Activated naive CD4-positive, alpha-beta T cell treated with anti-CD3 and anti-CD28 coated beads for 36 hours (primary cell): ENCODE measurements at regions of chr5 and their contacts with region 1.

Region 1: DNA sequence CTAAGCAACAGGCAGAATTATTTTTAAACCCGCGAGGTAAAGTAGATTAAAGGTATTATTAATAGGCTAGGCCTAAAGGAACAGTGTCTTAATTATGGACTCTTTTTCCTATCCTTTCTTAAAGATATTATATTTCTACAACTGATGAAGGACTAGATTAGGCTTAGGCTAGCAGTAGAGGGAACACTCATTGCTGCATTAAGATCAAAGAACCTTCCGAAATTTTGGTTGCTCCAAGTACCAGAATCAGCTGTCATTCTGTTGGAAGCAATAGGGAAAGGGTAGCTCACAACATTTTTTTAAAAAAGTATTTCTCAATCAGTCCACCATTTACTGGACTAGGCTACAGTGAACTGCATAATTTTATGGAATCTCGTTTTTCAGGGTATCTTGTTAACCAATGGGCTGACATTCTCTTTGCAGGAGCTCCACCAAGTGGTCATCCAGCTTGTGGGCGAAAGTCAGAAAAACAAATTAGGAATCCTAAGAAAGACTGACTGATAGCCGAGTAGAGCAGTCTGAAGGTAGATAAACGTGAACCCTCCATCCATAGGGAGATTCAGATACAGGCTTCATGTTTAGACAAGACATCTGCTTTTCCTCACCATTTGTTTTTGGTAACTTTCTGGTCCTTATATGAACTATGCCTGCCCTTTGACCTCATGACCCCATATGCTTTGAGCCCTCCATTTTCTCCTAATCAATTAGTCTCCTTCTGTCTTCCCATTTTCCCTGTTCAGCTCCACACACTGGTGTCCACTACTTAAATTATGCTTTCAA is 103.6 kb upstream of the CHD1 start:
- DNase-seq: peak; percentile 75
- H3K4me3 Mint-ChIP-seq: peak overlapping the region; percentile 72
- H3K27ac Mint-ChIP-seq: peak overlapping the region; percentile 84
- H3K4me1 Mint-ChIP-seq: peaks cover 72% of the 10 kb centered on the region
- H3K27me3 Mint-ChIP-seq: no peaks in the 10 kb centered on the region

Region 2: GRCh38 chr5:97183100-97183929 is 1849.1 kb before region 1 on chr5 and contains the start of gene RIOK2:
- CTCF ChIA-PET with region 1: no interaction called
- intact Hi-C with region 1: loop called (anchors 2 kb)
- DNase-seq: peak; percentile 97
- H3K4me3 Mint-ChIP-seq: peak within 1 kb of the TSS; percentile 93
- H3K27ac Mint-ChIP-seq: peak within 1 kb of the TSS; percentile 99
- H3K4me1 Mint-ChIP-seq: peaks cover 33% of the 10 kb centered on the region
- H3K27me3 Mint-ChIP-seq: no peaks in the 10 kb centered on the region
- total RNA-seq, gene RIOK2: 29.1 to 32.0 TPM

Region 3: GRCh38 chr5:98301547-98301946 is 730.9 kb before region 1 on chr5:
- CTCF ChIA-PET with region 1: no interaction called
- intact Hi-C with region 1: no loop called
- DNase-seq: no peak
- H3K4me3 Mint-ChIP-seq: no peak overlapping the region
- H3K27ac Mint-ChIP-seq: no peak overlapping the region
- H3K4me1 Mint-ChIP-seq: no peaks in the 10 kb centered on the region
- H3K27me3 Mint-ChIP-seq: peaks cover 7% of the 10 kb centered on the region

Region 4: GRCh38 chr5:98905857-98906690 is 126.3 kb before region 1 on chr5:
- CTCF ChIA-PET with region 1: interaction called, 22 read pairs
- intact Hi-C with region 1: loop called (anchors 1 kb)
- DNase-seq: no peak
- H3K4me3 Mint-ChIP-seq: no peak overlapping the region
- H3K27ac Mint-ChIP-seq: no peak overlapping the region
- H3K4me1 Mint-ChIP-seq: peaks cover 43% of the 10 kb centered on the region
- H3K27me3 Mint-ChIP-seq: no peaks in the 10 kb centered on the region

Region 5: DNA sequence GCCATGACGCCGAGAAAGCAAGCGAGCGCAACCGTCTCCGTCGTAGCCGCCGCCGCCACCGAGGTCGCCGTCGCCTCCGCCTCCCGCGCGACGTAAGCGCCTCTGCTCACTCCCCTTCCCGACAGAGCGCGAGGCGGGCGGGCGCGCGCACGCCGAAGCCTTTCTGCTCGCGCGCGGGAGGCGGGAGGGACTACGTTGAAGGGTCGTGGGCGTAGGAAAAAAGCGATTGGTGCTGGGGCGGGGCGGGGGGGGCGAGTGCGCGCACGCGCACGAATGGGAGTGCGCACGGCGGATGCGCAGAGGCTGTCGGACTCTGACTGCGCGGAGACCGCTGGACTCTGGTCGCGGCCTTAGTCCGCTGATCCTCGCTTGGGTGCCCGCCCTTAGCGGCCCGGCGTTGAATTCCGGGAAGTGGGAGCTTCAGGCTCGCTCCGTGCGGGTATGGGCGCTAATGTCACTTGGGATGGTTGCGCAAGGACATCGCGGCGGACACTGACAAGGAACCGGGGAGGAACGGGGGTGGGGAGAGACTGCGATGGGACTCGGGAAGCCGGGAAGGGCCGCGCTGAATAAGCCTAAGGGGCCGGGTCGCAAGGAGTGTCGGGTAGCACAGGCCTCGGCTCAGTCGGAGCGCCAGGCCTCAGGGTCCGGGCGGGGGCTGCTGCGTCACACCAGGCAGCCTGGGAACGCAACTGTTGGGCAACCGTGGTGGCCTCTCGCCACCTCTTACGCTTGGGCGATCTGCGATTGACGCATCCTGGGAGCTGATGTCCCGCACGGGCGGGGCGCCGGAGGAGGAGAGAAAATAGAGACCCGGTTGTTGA is 103.3 kb before region 1 on chr5 and contains the start of gene CHD1:
- CTCF ChIA-PET with region 1: interaction called, 3 read pairs
- intact Hi-C with region 1: loop called (anchors 1 kb)
- DNase-seq: peak; percentile 97
- H3K4me3 Mint-ChIP-seq: peak within 1 kb of the TSS; percentile 93
- H3K27ac Mint-ChIP-seq: peak within 1 kb of the TSS; percentile 100
- H3K4me1 Mint-ChIP-seq: peaks cover 57% of the 10 kb centered on the region
- H3K27me3 Mint-ChIP-seq: no peaks in the 10 kb centered on the region
- total RNA-seq, gene CHD1: 50.5 to 52.1 TPM

Region 6: GRCh38 chr5:99060306-99061261 is 28.2 kb after region 1 on chr5:
- CTCF ChIA-PET with region 1: interaction called, 9 read pairs
- intact Hi-C with region 1: loop called (anchors 1 kb)
- DNase-seq: peak; percentile 92
- H3K4me3 Mint-ChIP-seq: no peak overlapping the region
- H3K27ac Mint-ChIP-seq: no peak overlapping the region
- H3K4me1 Mint-ChIP-seq: peaks cover 1% of the 10 kb centered on the region
- H3K27me3 Mint-ChIP-seq: no peaks in the 10 kb centered on the region